ENCODE measurements at regions of chr10 and their contacts with region 1.

Region 1: GRCh38 chr10:71234970-71235685 is 22.8 kb downstream of the UNC5B start:
- DNase-seq: peak; percentile 83
- H3K4me3 ChIP-seq: peak overlapping the region; percentile 6 to 46; a peak in 3 of 4 replicates
- H3K27ac ChIP-seq: peak overlapping the region; percentile 94 to 100
- H3K4me1 ChIP-seq: peaks cover 82 to 97% of the 10 kb centered on the region in 2 experiments
- H3K27me3 ChIP-seq: no peaks in the 10 kb centered on the region
- CTCF ChIP-seq: no peak
- EP300 ChIP-seq: peak; percentile 84 to 98
- RAD21 ChIP-seq: peak; percentile 38; the same call in 1 of the 2 replicates

Region 2: DNA sequence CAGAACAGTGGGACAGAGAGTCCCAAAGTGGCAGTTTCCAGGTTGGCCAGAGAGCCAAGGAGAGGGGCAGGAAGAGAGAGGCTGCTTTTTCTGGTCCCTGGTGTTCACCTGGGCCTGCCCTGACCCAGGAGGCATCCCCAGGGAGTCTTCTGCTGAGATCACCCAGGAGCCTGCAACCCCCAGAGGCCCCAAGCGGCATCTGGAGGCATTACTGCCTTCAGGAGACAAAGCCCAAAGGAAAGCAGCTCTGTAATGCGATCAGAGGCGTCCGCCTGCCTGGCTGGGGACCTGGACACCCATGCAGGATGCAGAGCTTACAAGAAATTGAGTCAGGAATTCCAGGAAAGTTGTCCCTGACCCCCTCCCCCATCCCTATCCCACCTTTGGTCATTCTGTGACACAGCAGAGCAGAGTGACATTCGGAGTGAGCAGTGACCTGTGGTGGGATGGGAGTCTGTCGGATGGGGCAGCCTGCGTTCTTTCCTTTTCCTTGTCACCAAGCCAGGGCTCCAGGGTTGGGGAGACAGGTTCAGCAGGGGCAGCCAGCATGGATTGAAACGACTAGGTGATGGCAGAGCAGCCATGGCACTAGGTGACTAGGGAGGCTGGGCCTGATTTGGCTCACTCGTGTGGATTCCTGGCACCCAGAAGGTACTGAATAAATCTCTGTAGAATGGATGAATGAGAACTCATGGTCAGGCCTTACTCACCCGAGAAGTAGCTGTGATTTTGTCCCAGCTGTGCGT is 12.4 kb before region 1 on chr10:
- CTCF ChIA-PET with region 1: interaction called, 71 read pairs
- POLR2A ChIA-PET with region 1: interaction called, 65 read pairs
- DNase-seq: no peak
- H3K4me3 ChIP-seq: no peak overlapping the region; a peak in 1 of 4 replicates
- H3K27ac ChIP-seq: peak overlapping the region; percentile 29 to 98
- H3K4me1 ChIP-seq: peaks cover 44 to 75% of the 10 kb centered on the region in 2 experiments
- H3K27me3 ChIP-seq: no peaks in the 10 kb centered on the region
- CTCF ChIP-seq: peak; percentile 27; the same call in 1 of the 2 replicates
- EP300 ChIP-seq: 0 out of 4 replicates have a peak, but pooled peaks of 1 of the 2 experiments have one; percentile 24
- RAD21 ChIP-seq: no peak

Region 3: DNA sequence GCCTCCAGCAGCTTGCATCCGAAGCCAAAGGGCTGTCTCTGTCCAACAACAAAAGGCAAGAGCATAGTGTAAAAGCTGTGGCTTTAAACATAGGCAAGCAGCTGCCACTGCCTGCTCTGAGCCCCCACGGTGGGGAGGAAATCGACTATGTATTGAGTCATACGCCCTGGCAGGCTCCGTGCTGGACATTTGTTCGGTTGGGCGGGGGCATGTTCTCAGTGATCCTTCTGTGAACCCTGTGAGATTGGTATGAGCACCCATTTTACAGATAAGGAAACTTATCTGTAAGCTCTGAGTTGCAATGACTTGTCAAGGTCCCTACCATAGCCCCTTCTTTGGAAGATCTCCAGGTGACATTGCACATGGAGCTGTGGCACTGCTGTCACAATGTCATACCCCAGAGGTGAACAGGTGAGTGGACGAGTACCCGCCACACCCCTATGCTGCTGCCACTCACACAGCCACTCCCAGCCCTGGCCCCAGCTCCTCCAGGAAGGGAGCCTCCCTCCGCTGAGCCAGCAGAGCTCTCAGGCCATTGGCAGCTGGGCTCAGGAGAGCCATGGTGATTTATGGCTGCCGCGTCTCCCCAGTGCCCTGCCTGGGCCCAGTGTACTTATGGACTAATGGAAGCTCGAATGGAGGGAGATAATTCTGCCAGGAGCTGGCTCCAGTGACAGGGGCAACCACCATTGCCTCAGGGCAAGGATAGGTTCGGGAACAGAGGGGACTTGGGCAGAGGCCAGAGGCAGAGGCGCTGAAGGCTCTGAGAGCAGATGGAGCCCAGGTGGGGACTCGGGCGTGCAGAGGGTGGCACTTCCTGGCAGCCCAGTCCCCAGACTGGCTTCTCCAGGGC is 20.9 kb after region 1 on chr10:
- CTCF ChIA-PET with region 1: interaction called, 16 read pairs
- POLR2A ChIA-PET with region 1: interaction called, 26 read pairs
- DNase-seq: peak; percentile 74
- H3K4me3 ChIP-seq: no peak overlapping the region
- H3K27ac ChIP-seq: peak overlapping the region; percentile 53 to 100
- H3K4me1 ChIP-seq: peaks cover 56 to 97% of the 10 kb centered on the region in 2 experiments
- H3K27me3 ChIP-seq: no peaks in the 10 kb centered on the region
- CTCF ChIP-seq: no peak
- EP300 ChIP-seq: peak in 1 of 2 experiments; percentile 81; a peak in 3 of 4 replicates
- RAD21 ChIP-seq: 0 out of 2 replicates have a peak, but pooled peaks have one; percentile 20

Region 4: DNA sequence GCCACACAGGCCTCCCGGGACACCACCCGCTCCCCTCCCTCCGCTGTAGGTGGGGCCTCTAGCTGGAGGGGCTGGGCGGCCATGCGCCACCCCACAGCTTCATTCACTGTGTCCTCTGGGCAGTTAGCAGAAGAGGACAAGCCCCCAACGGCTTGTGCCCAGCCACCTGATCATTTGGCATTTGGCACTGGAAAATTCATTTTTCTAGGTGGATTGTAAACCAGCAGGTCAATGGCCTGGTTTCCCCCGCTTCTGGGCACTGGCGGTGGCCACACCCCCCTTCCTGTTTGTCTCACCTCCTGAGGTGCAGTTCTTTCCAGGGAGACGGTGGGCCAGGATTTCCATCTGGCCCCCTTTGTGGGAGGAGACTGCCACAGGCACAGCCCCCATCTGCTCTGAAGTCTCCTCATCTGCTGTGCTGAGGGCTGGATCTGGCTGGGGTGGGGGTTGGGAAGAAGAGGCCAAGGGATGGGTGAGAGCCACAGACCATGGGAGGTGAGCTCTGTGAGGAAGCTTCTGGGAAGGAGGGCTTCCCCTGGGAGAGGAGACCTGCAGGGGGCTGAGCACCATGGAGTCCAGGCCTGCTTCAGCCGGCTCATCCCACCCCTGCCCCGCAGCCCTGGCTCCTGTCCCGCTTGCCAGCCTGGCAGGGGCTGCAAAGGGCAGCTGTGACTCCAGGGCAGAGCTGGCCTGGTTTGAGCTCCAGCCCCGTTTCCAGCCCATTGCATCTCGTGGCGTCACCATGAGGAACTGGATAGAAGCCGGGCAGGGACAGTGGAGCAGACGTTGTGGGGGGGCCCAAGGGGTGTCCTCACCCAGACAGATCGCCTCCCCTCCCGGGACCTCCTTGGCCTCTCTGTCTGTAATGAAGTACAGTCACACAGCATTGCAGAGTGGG is 43.8 kb after region 1 on chr10:
- CTCF ChIA-PET with region 1: interaction called, 139 read pairs
- POLR2A ChIA-PET with region 1: interaction called, 28 read pairs
- DNase-seq: peak; percentile 90
- H3K4me3 ChIP-seq: no peak overlapping the region; a peak in 1 of 4 replicates
- H3K27ac ChIP-seq: peak overlapping the region in 1 of 2 experiments; percentile 99; a peak in 2 of 4 replicates
- H3K4me1 ChIP-seq: peaks cover 0 to 67% of the 10 kb centered on the region in 2 experiments; a peak in 3 of 4 replicates
- H3K27me3 ChIP-seq: no peaks in the 10 kb centered on the region
- CTCF ChIP-seq: no peak
- EP300 ChIP-seq: peak in 1 of 2 experiments; percentile 91; a peak in 2 of 4 replicates
- RAD21 ChIP-seq: peak; percentile 23; the same call in 1 of the 2 replicates

Region 5: DNA sequence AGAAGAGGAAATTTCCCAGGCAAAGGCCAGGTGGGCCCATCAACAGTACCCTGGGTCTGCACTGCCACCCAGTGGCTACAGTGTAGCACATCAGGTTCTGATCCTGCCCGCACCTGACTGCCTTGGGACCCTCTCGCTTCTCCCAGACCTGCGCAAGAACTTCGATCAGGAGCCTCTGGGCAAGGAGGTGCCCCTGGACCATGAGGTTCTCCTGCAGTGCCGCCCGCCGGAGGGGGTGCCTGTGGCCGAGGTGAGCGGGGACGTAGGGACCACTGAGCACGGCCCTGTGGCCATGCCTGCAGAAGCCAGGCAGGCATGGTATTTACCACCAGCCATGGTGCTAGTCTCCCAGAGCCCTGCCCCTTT is 50.0 kb after region 1 on chr10:
- CTCF ChIA-PET with region 1: interaction called, 20 read pairs
- POLR2A ChIA-PET with region 1: no interaction called
- DNase-seq: peak; percentile 85
- H3K4me3 ChIP-seq: no peak overlapping the region
- H3K27ac ChIP-seq: no peak overlapping the region; a peak in 1 of 4 replicates
- H3K4me1 ChIP-seq: peaks cover 0 to 22% of the 10 kb centered on the region in 2 experiments; a peak in 2 of 4 replicates
- H3K27me3 ChIP-seq: no peaks in the 10 kb centered on the region
- CTCF ChIP-seq: peak; percentile 76
- EP300 ChIP-seq: no peak
- RAD21 ChIP-seq: peak; percentile 83